ENCODE measurements at regions of chr11 and their contacts with region 1.

Region 1: DNA sequence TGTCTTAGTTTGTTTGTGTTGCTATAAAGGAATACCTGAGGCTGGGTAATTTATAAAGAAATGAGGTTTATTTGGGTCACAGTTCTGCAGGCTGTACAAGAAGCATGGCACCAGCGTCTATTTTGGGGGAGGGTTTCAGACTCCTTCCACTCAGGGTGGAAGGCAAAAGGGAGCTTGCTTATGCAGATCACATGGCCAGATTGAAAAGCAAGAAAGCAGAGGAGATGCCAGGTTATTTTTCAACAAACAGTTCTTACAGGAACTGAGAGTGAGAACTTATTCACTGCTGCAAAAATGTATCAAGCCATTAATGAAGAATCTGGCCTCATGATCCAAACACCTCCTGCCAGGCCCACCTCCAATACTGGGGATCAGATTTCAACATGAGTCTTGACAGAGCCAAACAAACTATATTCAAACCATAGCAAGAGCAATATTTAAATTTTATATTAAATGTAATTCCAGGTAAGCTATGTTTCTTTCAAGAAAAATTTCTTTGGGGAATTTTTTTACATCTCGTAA is 66.9 kb downstream of the NXPE2 start:
- DNase-seq: no peak
- H3K4me3 ChIP-seq: no peak overlapping the region
- H3K27ac ChIP-seq: no peak overlapping the region
- H3K27me3 ChIP-seq: peaks cover 0 to 3% (median 0%) of the 10 kb centered on the region in 45 donors
- CTCF ChIP-seq: no peak

Region 2: DNA sequence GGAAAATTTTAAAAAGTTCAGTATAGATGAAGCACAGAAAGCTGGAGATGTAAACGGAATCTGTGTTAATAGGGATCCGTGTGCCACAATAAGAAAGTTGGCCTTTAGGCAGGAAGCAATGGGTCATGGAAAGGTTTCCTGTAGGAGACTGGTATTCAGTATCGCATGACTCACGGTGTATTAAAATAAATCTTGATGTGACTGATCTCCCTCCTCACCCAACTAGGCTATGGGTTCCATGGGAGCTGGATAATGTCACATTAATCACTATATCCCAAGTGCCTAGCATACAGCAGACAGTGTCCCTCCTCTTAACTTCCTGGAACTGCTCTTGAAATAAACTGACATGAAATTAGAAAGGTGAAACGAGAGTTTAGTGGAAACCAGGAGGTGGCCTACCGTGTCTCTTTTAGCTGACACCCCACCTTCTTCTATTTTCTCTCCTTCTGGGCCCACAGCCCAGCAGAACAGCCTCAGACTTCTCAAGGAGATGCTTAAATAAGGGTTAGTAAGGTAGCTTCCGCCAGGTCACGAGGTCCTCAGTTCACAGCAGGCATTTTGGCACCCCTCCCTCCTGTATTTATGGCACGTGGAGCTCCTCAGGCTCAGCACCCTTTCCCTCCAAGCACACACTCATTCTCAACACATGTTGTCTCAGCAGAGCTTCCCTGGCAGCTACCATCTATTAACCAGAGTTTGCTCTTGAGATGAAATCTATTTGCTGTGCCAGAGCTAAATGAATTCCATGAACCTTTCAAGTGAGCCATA is 51.9 kb after region 1 on chr11:
- intact Hi-C with region 1: no loop called
- DNase-seq: no peak
- H3K4me3 ChIP-seq: no peak overlapping the region
- H3K27ac ChIP-seq: no peak overlapping the region
- H3K27me3 ChIP-seq: peaks cover 0 to 39% (median 0%) of the 10 kb centered on the region in 45 donors
- CTCF ChIP-seq: no peak

Region 3: GRCh38 chr11:116276051-116277044 is 1531.1 kb after region 1 on chr11:
- intact Hi-C with region 1: loop called in 1 of 2 experiments (anchors 10 kb)
- DNase-seq: peak; percentile 53 to 80 (median 66)
- H3K4me3 ChIP-seq: peak overlapping the region in 37 of 59 donors; percentile 6 to 54 (median 31)
- H3K27ac ChIP-seq: no peak overlapping the region
- H3K27me3 ChIP-seq: no peaks in the 10 kb centered on the region
- CTCF ChIP-seq: peak; percentile 50 to 99 (median 96)